Lower lobe of right lung (tissue), 2 donors: ENCODE measurements at regions of chr9 and their contacts with region 1.

Region 1: DNA sequence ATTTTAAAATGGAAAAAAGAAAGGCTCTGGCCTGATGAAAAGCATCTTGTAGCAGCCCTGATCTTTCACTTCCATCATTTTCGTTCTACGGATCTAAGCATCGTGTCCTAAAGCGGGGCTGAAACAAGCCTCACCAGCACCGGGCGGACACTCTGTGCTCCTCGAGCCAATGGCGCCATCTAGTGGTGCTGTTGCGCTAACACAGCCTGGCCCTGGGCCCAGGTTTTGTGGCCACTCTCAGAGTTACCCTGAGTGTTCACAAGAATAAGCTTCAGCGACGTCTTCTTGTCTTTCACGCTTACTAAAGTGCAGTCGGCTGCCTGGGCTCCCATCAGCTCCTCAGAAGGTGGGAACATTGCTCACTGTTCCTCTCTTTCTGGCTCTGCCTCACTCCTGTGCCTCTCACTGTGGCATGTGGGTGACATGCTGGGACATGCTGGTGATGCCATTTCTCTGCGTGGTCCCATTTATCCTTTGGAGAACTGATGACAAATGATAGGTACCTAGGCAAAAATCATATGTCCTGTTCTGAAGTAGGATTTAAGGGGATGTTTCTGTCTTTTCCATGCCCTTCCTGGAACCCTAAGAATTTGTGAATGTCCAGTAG is 32.7 kb downstream of the DMRT3 start:
- DNase-seq: peak; percentile 85
- ATAC-seq: peak; percentile 95 to 96
- H3K4me3 ChIP-seq: no peak overlapping the region
- H3K27ac ChIP-seq: no peak overlapping the region
- H3K4me1 ChIP-seq: peaks cover 3% of the 10 kb centered on the region
- H3K27me3 ChIP-seq: no peaks in the 10 kb centered on the region
- CTCF ChIP-seq: peak; percentile 99

Region 2: GRCh38 chr9:437574-438001 is 571.6 kb before region 1 on chr9:
- intact Hi-C with region 1: no loop called
- DNase-seq: no peak
- ATAC-seq: peak; percentile 72 to 83
- H3K4me3 ChIP-seq: no peak overlapping the region
- H3K27ac ChIP-seq: peak overlapping the region; percentile 65
- H3K4me1 ChIP-seq: no peaks in the 10 kb centered on the region
- H3K27me3 ChIP-seq: no peaks in the 10 kb centered on the region
- CTCF ChIP-seq: no peak

Region 3: GRCh38 chr9:776086-776485 is 233.1 kb before region 1 on chr9:
- intact Hi-C with region 1: no loop called
- DNase-seq: no peak
- ATAC-seq: no peak
- H3K4me3 ChIP-seq: no peak overlapping the region
- H3K27ac ChIP-seq: no peak overlapping the region
- H3K4me1 ChIP-seq: no peaks in the 10 kb centered on the region
- H3K27me3 ChIP-seq: no peaks in the 10 kb centered on the region
- CTCF ChIP-seq: no peak

Region 4: GRCh38 chr9:893843-894420 is 115.3 kb before region 1 on chr9:
- intact Hi-C with region 1: loop called (anchors 5 kb)
- DNase-seq: peak; percentile 56
- ATAC-seq: peak; percentile 95 to 96
- H3K4me3 ChIP-seq: no peak overlapping the region
- H3K27ac ChIP-seq: no peak overlapping the region
- H3K4me1 ChIP-seq: peaks cover 6% of the 10 kb centered on the region
- H3K27me3 ChIP-seq: no peaks in the 10 kb centered on the region
- CTCF ChIP-seq: peak; percentile 70